ENCODE measurements at regions of chr1 and their contacts with region 1.

Region 1: DNA sequence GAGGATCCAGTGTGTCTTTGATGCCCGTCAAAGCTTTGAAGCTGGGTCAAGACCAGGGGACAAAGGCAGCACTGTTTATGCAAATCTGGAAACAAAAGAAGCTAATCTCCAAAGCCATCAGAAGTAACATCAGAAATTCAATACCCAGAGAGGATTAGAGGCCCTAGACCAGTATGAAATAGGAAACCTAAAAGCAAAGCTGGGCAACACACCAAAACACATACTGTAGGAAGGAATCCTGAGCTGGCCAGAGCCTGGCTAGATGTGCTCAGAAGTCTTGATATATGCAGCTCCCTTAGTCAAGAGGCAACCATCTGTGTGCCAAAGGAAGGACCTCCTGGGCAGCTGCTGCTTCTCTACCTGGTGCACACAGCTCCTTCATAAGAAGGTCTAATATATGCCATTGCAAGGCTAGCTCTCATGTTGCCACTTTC is 12.3 kb downstream of the COLGALT2 start:
- DNase-seq: peak; percentile 67 to 73
- H3K4me3 ChIP-seq: no peak overlapping the region
- H3K27ac ChIP-seq: no peak overlapping the region
- H3K4me1 ChIP-seq: 0 out of 2 replicates have a peak, but pooled peaks cover 4% of the 10 kb centered on the region
- H3K27me3 ChIP-seq: no peaks in the 10 kb centered on the region
- CTCF ChIP-seq: no peak

Region 2: DNA sequence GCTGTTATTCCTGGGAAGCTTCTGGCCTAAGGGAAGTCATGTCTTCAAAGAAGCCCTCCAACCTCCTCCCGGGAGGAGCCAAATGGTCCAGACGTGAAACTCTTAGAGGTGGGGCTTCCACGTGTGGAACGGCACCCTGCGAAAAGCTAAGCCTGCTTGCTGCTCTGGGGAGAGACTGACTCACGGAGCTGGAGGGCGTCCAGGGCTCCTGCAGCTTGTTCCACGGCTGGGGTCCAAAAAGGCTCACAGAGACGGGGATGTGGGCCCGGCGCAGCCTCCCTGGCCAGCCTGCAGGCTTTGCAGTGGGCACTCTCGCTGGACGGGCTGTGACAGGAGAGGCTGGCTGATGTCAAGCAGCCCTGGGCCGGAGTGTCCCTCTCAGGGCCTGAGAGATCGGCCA is 92.8 kb before region 1 on chr1:
- CTCF ChIA-PET with region 1: no interaction called
- POLR2A ChIA-PET with region 1: interaction called, 14 read pairs
- intact Hi-C with region 1: no loop called
- DNase-seq: no peak
- H3K4me3 ChIP-seq: no peak overlapping the region
- H3K27ac ChIP-seq: no peak overlapping the region
- H3K4me1 ChIP-seq: no peaks in the 10 kb centered on the region
- H3K27me3 ChIP-seq: no peaks in the 10 kb centered on the region
- CTCF ChIP-seq: no peak

Region 3: DNA sequence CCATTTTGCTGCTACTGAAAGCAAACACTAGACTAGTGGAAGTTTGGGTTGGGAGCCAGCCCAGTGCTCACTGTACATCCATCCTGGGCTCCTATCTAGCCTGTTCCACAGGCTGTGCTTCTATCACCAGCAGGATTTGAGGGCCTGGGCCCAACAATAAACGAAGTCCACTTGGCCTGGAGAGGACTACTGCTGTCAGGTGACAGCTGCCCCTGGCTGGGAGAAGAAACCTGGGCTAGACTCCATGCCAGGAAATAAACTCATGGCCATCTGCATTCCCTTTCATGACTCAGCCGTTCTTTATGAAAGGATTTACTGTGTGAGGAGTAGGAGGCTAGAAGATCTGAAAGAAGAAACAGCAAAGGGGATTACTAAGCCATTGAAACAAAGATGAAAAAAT is 23.2 kb before region 1 on chr1:
- CTCF ChIA-PET with region 1: no interaction called
- POLR2A ChIA-PET with region 1: no interaction called
- intact Hi-C with region 1: loop called (anchors 2 kb)
- DNase-seq: peak; percentile 49 to 78
- H3K4me3 ChIP-seq: no peak overlapping the region
- H3K27ac ChIP-seq: peak overlapping the region; percentile 37; the same call in 1 of the 2 replicates
- H3K4me1 ChIP-seq: peaks cover 9% of the 10 kb centered on the region; the same call in 1 of the 2 replicates
- H3K27me3 ChIP-seq: no peaks in the 10 kb centered on the region
- CTCF ChIP-seq: no peak

Region 4: GRCh38 chr1:184056921-184057496 is 31.8 kb after region 1 on chr1:
- CTCF ChIA-PET with region 1: interaction called, 3 read pairs
- POLR2A ChIA-PET with region 1: no interaction called
- intact Hi-C with region 1: loop called (anchors 2 kb)
- DNase-seq: peak; percentile 47 to 70
- H3K4me3 ChIP-seq: no peak overlapping the region
- H3K27ac ChIP-seq: peak overlapping the region; percentile 62
- H3K4me1 ChIP-seq: peaks cover 34% of the 10 kb centered on the region
- H3K27me3 ChIP-seq: no peaks in the 10 kb centered on the region
- CTCF ChIP-seq: no peak

Region 5: DNA sequence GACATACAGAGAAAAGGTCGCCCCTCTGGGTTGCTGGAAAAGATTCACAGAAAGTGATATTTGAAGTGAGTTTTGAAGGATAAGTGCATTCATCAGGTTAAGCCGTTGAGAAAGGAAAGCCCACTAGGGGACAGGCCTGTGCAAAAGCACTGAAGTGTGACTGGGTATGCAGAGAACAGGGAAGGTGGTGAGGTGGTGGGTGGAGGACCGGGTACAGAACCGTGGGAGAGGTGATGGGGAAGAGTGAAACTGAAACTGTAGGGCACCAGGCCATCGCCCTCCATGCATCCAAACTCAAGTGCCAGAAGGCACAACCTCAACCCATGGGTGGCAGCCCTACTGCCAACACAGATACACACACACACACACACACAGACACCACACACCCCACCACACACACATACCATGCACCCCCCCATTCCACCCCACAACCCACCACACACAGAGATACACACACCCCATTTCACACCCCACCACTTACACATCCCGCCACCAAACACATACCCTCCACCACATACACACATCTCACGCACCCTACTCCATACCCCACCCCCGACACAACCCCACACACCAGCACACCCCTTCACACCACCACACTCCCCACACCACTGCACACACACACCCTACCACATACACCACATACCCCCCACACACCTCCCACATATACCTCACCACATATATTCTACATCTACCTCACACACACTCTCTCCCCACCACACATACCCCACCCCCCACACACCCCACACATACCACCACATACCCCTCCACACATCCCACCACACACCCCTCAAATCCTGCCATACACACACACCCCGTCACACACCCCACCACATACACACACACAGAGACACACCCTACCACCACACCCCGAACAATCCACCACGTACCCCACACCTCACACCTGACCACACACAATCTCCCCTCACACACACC is 85.3 kb after region 1 on chr1:
- CTCF ChIA-PET with region 1: no interaction called
- POLR2A ChIA-PET with region 1: no interaction called
- intact Hi-C with region 1: no loop called
- DNase-seq: no peak
- H3K4me3 ChIP-seq: no peak overlapping the region
- H3K27ac ChIP-seq: no peak overlapping the region
- H3K4me1 ChIP-seq: peaks cover 10% of the 10 kb centered on the region
- H3K27me3 ChIP-seq: no peaks in the 10 kb centered on the region
- CTCF ChIP-seq: no peak